ENCODE measurements at regions of chr17 and their contacts with region 1.

Region 1: GRCh38 chr17:40437095-40437732 is 6.0 kb upstream of the IGFBP4 start:
- DNase-seq: no peak
- H3K4me3 ChIP-seq: no peak overlapping the region
- H3K27ac ChIP-seq: no peak overlapping the region
- H3K4me1 ChIP-seq: peaks cover 0 to under 1% of the 10 kb centered on the region in 2 donors
- H3K27me3 ChIP-seq: no peaks in the 10 kb centered on the region
- CTCF ChIP-seq: no peak

Region 2: DNA sequence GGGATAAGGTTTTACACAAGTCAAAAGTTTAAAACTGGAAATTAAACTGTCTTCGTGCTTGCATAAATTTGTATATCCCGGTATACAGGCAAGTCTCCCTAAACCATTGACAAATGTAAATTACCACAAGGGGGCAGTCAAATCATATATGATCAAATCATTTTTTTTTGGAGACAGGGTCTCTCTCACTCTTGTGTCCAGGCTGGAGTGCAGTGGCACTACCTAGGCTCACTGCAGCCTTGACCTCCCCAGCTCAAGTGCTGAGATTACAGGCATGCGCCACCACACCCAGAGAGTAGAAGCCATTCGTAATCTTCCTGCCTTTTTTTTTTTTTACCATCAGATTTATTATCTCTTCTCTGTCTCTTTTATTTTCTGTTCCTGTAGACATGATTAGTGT is 38.0 kb before region 1 on chr17:
- intact Hi-C with region 1: loop called (anchors 5 kb)
- DNase-seq: no peak
- H3K4me3 ChIP-seq: no peak overlapping the region
- H3K27ac ChIP-seq: no peak overlapping the region
- H3K4me1 ChIP-seq: no peaks in the 10 kb centered on the region
- H3K27me3 ChIP-seq: no peaks in the 10 kb centered on the region
- CTCF ChIP-seq: peak; percentile 41 to 55 (median 43)

Region 3: GRCh38 chr17:40559954-40560591 is 122.9 kb after region 1 on chr17:
- intact Hi-C with region 1: loop called (anchors 2 kb)
- DNase-seq: peak; percentile 43 to 91
- H3K4me3 ChIP-seq: peak overlapping the region in 1 of 2 donors; percentile 33
- H3K27ac ChIP-seq: peak overlapping the region in 1 of 2 donors; percentile 49
- H3K4me1 ChIP-seq: peaks cover 0 to 10% of the 10 kb centered on the region in 2 donors
- H3K27me3 ChIP-seq: no peaks in the 10 kb centered on the region
- CTCF ChIP-seq: peak; percentile 96 to 98 (median 97)

Region 4: DNA sequence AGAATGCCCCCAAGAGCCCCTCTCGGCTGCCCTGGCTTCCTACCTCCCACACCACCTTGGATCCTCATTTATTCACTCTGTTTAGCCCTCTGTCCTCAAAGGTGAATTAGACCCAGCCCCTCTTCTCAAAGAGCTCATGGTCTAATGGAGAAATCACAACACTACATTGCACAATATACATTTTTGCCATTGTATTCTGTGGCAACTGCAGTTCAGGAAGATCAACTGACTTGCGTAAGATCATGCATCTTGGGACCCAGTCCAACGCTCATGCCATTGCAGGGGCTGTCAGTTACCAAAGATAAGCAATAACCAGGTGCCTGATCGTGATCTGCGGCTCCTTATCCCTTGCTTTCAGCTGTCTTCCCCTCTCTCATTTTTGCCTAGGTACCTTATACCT is 1002.2 kb after region 1 on chr17:
- intact Hi-C with region 1: no loop called
- DNase-seq: no peak
- H3K4me3 ChIP-seq: no peak overlapping the region
- H3K27ac ChIP-seq: no peak overlapping the region
- H3K4me1 ChIP-seq: no peaks in the 10 kb centered on the region
- H3K27me3 ChIP-seq: no peaks in the 10 kb centered on the region
- CTCF ChIP-seq: no peak

Measured in ascending aorta (tissue), 2 donors.